HEK293 (cell line): ENCODE measurements at regions of chr16 and their contacts with region 1.

Region 1: DNA sequence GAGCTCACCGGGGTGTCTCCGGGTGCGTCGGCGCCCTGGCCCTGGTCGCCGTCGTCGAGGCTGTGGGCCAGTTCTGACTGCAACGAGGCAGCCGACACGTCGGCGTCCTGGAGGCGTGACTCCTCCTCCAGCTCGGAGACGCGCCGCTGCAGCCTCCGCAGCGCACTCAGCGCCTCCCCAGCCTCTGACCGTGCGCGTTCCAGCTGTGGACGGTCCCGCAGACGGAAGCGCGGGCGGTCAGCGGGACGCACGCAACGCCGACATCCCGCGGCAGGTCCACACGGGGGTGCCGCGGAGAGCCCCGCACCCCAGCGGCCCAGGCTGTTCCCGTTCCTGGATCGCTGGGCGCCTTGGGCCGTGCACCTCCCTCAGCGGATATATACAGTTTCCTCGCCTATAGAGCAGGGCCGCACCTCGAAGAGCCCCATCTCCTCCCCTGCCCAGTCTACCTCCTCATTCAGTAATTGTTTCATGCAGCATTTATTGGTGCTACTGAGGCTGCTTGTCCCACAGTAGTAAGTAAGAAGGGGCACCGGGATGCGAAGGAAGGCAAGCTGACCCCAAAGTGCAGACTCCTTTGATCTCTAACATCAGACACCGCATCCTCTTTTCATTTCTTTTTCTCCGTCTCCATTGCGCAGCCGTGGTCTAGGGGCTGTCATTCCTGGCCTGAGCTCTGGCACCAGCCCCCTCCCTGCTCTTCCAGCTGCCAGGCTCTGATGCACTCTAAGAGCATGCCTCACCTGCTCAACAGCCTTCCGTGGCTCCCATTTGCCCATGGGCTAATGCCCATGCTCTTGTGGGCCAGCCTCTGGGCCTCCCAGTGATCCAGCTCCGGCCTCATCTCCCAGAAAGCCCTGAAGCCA is 5.9 kb downstream of the THOC6 start:
- H3K4me3 ChIP-seq: no peak overlapping the region
- H3K27ac ChIP-seq: no peak overlapping the region
- H3K4me1 ChIP-seq: peaks cover 5% of the 10 kb centered on the region
- CTCF ChIP-seq: no peak

Region 2: DNA sequence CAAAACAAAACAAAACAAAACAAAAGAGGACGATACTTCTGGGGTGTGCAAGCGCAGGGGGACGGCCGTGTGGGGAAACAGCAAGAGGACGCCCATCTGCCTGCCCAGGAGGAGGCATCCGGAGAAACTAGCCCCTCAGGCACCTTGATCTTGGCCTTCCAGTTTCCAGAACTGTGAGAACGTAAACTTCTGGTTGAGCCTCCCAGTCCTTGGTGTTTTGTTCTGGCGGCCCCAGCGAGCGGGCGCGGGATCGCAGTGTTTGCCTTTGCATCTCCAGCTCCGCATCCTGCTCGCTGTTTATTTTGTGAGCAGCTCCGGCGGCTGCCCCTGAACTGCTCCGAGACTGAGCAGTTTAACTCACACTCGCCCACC is 15.6 kb after region 1 on chr16:
- CTCF ChIA-PET with region 1: interaction called, 87 read pairs
- POLR2A ChIA-PET with region 1: interaction called, 11 read pairs
- H3K4me3 ChIP-seq: peak overlapping the region; percentile 48
- H3K27ac ChIP-seq: no peak overlapping the region
- H3K4me1 ChIP-seq: no peaks in the 10 kb centered on the region
- CTCF ChIP-seq: no peak

Region 3: GRCh38 chr16:3051494-3051893 is 21.7 kb after region 1 on chr16:
- CTCF ChIA-PET with region 1: interaction called, 39 read pairs
- POLR2A ChIA-PET with region 1: interaction called, 6 read pairs
- H3K4me3 ChIP-seq: no peak overlapping the region
- H3K27ac ChIP-seq: no peak overlapping the region
- H3K4me1 ChIP-seq: no peaks in the 10 kb centered on the region
- CTCF ChIP-seq: no peak

Region 4: GRCh38 chr16:3059000-3059722 is 29.4 kb after region 1 on chr16:
- CTCF ChIA-PET with region 1: interaction called, 39 read pairs
- POLR2A ChIA-PET with region 1: interaction called, 3 read pairs
- H3K4me3 ChIP-seq: peak overlapping the region; percentile 87
- H3K27ac ChIP-seq: peak overlapping the region; percentile 77; the same call in 1 of the 2 replicates
- H3K4me1 ChIP-seq: peaks cover 3% of the 10 kb centered on the region
- CTCF ChIP-seq: peak; percentile 99